Transverse colon (tissue), 4 donors: ENCODE measurements at regions of chr19 and their contacts with region 1.

Region 1: GRCh38 chr19:15091901-15092753 is 10.1 kb downstream of the OR1I1 start:
- DNase-seq: no peak
- H3K4me3 ChIP-seq: no peak overlapping the region
- H3K27ac ChIP-seq: no peak overlapping the region
- H3K4me1 ChIP-seq: peaks cover 0 to 7% (median 2%) of the 10 kb centered on the region in 4 donors
- H3K27me3 ChIP-seq: no peaks in the 10 kb centered on the region
- CTCF ChIP-seq: peak; percentile 58 to 72 (median 65)
- EP300 ChIP-seq: no peak
- POLR2A ChIP-seq: no peak

Region 2: GRCh38 chr19:15015946-15016542 is 76.1 kb before region 1 on chr19:
- in situ Hi-C with region 1: no loop called
- intact Hi-C with region 1: no loop called
- DNase-seq: no peak
- H3K4me3 ChIP-seq: no peak overlapping the region
- H3K27ac ChIP-seq: no peak overlapping the region
- H3K4me1 ChIP-seq: no peaks in the 10 kb centered on the region
- H3K27me3 ChIP-seq: peaks cover 37% of the 10 kb centered on the region
- CTCF ChIP-seq: no peak
- EP300 ChIP-seq: no peak
- POLR2A ChIP-seq: no peak

Region 3: GRCh38 chr19:15144036-15144646 is 52.0 kb after region 1 on chr19:
- in situ Hi-C with region 1: loop called in 1 of 4 experiments (anchors 10 kb)
- intact Hi-C with region 1: no loop called
- DNase-seq: no peak
- H3K4me3 ChIP-seq: no peak overlapping the region
- H3K27ac ChIP-seq: no peak overlapping the region
- H3K4me1 ChIP-seq: no peaks in the 10 kb centered on the region
- H3K27me3 ChIP-seq: no peaks in the 10 kb centered on the region
- CTCF ChIP-seq: no peak
- EP300 ChIP-seq: no peak
- POLR2A ChIP-seq: no peak

Region 4: DNA sequence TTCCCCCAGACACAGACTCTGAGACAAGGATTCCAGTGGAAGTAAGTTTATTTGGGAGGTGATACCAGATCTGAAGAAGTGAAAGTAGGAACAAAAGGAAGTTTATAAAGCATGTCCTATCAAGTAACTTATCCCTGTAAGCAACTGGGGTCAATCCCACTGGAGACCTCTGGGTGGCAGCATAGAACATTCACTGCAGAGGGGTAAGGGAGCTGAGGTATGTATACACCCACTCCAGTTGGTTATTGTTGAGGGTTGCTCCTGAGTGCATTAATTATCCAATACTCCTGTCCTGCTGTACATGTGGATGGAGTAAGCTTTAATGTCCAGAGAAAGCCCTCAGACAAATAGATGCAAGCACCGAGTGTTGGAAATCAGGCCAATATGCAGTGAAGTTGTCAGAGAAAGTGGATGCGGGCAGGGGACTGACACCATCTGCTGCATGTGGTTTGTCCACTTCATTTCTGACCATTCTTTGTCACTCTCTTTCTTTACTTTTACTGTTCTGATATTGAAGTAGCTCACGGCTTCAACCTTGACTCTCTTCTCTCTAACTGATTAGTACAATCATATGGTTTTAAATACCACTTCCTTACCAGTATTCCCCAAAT is 62.0 kb after region 1 on chr19:
- in situ Hi-C with region 1: loop called in 1 of 4 experiments (anchors 10 kb)
- intact Hi-C with region 1: loop called (anchors 2 kb)
- DNase-seq: peak; percentile 38
- H3K4me3 ChIP-seq: no peak overlapping the region
- H3K27ac ChIP-seq: no peak overlapping the region
- H3K4me1 ChIP-seq: no peaks in the 10 kb centered on the region
- H3K27me3 ChIP-seq: no peaks in the 10 kb centered on the region
- CTCF ChIP-seq: peak in 4 of 5 experiments; percentile 23 to 41 (median 35)
- EP300 ChIP-seq: no peak
- POLR2A ChIP-seq: no peak

Region 5: GRCh38 chr19:15555759-15556633 is 463.9 kb after region 1 on chr19:
- in situ Hi-C with region 1: loop called in 2 of 4 experiments (anchors 10 kb)
- intact Hi-C with region 1: loop called (anchors 5 kb)
- DNase-seq: peak; percentile 91
- H3K4me3 ChIP-seq: peak overlapping the region in 2 of 4 donors; percentile 29 to 34
- H3K27ac ChIP-seq: peak overlapping the region in 3 of 4 donors; percentile 7 to 63 (median 10)
- H3K4me1 ChIP-seq: peaks cover 3 to 16% (median 13%) of the 10 kb centered on the region in 4 donors
- H3K27me3 ChIP-seq: peaks cover 29% of the 10 kb centered on the region
- CTCF ChIP-seq: peak; percentile 71 to 83 (median 76)
- EP300 ChIP-seq: no peak
- POLR2A ChIP-seq: no peak

Region 6: DNA sequence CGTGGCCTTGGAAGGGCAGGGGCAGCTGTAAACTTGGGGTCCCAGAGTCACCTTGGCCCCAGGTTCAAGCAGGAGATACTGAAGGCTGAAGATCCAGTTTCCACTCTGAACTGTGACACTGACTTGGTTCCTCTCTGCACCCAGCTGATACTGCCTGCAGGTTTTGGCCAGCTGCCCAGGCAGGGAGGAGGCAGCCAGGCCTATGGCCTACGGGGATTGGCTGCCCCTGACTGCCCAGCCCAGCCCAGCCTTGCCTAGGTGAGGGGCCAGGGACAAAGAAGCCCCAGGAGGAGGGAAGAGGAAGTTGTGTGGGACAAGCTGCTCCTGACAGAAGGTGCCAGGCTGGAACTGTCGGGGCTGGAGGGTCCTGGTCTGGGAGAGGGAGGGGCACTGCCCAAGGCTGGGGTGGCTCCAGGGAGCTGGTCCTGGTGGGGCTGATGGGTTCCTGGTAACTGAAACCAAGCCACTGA is 471.2 kb after region 1 on chr19:
- in situ Hi-C with region 1: loop called in 2 of 4 experiments (anchors 10 kb)
- intact Hi-C with region 1: loop called (anchors 5 kb)
- DNase-seq: peak; percentile 54
- H3K4me3 ChIP-seq: no peak overlapping the region
- H3K27ac ChIP-seq: no peak overlapping the region
- H3K4me1 ChIP-seq: peaks cover 0 to 9% (median 0%) of the 10 kb centered on the region in 4 donors
- H3K27me3 ChIP-seq: no peaks in the 10 kb centered on the region
- CTCF ChIP-seq: no peak
- EP300 ChIP-seq: no peak
- POLR2A ChIP-seq: no peak